Tibial artery (tissue), 4 donors: ENCODE measurements at regions of chr2 and their contacts with region 1.

Region 1: GRCh38 chr2:19347619-19348562 is 10.5 kb downstream of the OSR1 start:
- DNase-seq: peak; percentile 98
- H3K4me3 ChIP-seq: peak overlapping the region; percentile 63 to 71
- H3K27ac ChIP-seq: peak overlapping the region; percentile 93 to 96
- H3K4me1 ChIP-seq: peaks cover 0 to 34% (median 10%) of the 10 kb centered on the region in 4 donors
- H3K27me3 ChIP-seq: no peaks in the 10 kb centered on the region
- CTCF ChIP-seq: no peak

Region 2: DNA sequence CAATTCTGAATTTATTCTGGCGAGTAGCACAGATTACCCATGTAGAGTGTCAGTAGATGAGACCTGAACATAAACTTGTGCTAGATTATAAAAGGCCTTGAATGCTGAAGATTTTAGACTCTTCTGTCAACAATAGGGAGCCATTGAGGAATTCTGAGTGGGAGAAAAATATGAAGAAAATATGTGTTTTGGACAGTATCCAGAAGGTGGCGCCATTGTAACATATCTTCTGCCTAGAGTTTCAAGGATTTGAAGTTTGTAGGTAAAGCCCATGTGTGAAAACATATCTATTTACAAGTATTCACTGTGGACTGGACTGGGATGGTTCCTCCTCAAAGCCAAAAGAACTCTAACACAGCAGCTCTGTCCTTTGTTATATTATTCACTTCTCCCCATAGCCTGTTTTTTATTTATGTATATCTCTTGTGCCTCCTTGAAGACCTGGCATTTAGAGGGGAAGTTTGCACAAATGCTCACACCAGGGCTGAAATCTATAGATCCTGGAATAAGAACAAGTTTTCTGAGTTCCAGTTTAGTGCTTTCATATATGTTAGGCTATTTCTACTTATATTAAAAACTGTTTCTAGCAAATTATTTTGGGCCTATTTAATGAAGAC is 912.4 kb before region 1 on chr2:
- intact Hi-C with region 1: loop called (anchors 5 kb)
- DNase-seq: no peak
- H3K4me3 ChIP-seq: no peak overlapping the region
- H3K27ac ChIP-seq: peak overlapping the region; percentile 16 to 63
- H3K4me1 ChIP-seq: peaks cover 0 to 30% (median 9%) of the 10 kb centered on the region in 4 donors
- H3K27me3 ChIP-seq: no peaks in the 10 kb centered on the region
- CTCF ChIP-seq: peak; percentile 65 to 71

Region 3: DNA sequence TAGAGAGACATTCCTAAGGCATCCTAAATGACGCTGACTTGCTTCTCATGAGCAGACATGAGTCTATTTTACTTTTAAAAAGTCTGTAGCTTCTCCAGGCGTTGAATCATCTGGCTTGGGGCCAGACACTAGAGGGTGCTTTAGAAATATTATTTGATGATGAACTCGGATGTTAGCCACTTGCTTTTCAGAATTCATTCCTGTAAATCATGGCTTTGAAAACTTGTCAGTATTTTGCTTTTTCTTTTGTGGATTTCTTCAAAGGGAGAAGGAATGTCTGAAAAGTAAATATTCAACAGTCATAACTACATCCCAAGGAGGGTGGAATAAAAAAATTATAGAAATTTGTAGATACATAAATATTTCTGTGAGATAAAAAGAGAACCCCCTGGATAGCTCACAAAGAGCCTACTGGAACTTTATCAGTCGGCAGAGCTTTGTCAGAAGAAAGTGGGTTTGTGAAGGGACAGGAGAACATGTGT is 360.3 kb before region 1 on chr2:
- intact Hi-C with region 1: loop called (anchors 10 kb)
- DNase-seq: peak; percentile 84 to 88
- H3K4me3 ChIP-seq: no peak overlapping the region
- H3K27ac ChIP-seq: peak overlapping the region in 1 of 2 donors; percentile 12
- H3K4me1 ChIP-seq: peaks cover 0 to 44% (median 17%) of the 10 kb centered on the region in 4 donors
- H3K27me3 ChIP-seq: no peaks in the 10 kb centered on the region
- CTCF ChIP-seq: peak in 1 of 2 experiments; percentile 32

Region 4: GRCh38 chr2:19738707-19739106 is 390.8 kb after region 1 on chr2:
- intact Hi-C with region 1: loop called (anchors 10 kb)
- DNase-seq: peak; percentile 89 to 93
- H3K4me3 ChIP-seq: no peak overlapping the region
- H3K27ac ChIP-seq: peak overlapping the region; percentile 75 to 86
- H3K4me1 ChIP-seq: peaks cover 0 to 49% (median 22%) of the 10 kb centered on the region in 4 donors
- H3K27me3 ChIP-seq: no peaks in the 10 kb centered on the region
- CTCF ChIP-seq: no peak